ENCODE measurements at regions of chr5 and their contacts with region 1.

Region 1: GRCh38 chr5:170740551-170741205 is 42.8 kb upstream of the GABRP start:
- DNase-seq: no peak

Region 2: GRCh38 chr5:169873642-169874041 is 867.0 kb before region 1 on chr5:
- intact Hi-C with region 1: no loop called
- DNase-seq: no peak

Region 3: GRCh38 chr5:170791325-170791954 is 50.8 kb after region 1 on chr5:
- intact Hi-C with region 1: loop called (anchors 1 kb)
- DNase-seq: peak; percentile 84

Measured in cardiac septum (tissue), 1 donor.